PC-9 (cell line): ENCODE measurements at regions of chr5 and their contacts with region 1.

Region 1: GRCh38 chr5:103347716-103348430 is 89.3 kb downstream of the MACIR start:
- DNase-seq: peak; percentile 26 to 72
- H3K4me3 ChIP-seq: no peak overlapping the region
- H3K27ac ChIP-seq: peak overlapping the region; percentile 33; the same call in 1 of the 2 replicates
- H3K4me1 ChIP-seq: peaks cover 17% of the 10 kb centered on the region
- H3K27me3 ChIP-seq: no peaks in the 10 kb centered on the region
- CTCF ChIP-seq: no peak

Region 2: GRCh38 chr5:103166706-103167105 is 181.2 kb before region 1 on chr5:
- CTCF ChIA-PET with region 1: interaction called, 25 read pairs
- POLR2A ChIA-PET with region 1: no interaction called
- intact Hi-C with region 1: no loop called
- DNase-seq: no peak
- H3K4me3 ChIP-seq: no peak overlapping the region
- H3K27ac ChIP-seq: no peak overlapping the region
- H3K4me1 ChIP-seq: no peaks in the 10 kb centered on the region
- H3K27me3 ChIP-seq: no peaks in the 10 kb centered on the region
- CTCF ChIP-seq: no peak

Region 3: DNA sequence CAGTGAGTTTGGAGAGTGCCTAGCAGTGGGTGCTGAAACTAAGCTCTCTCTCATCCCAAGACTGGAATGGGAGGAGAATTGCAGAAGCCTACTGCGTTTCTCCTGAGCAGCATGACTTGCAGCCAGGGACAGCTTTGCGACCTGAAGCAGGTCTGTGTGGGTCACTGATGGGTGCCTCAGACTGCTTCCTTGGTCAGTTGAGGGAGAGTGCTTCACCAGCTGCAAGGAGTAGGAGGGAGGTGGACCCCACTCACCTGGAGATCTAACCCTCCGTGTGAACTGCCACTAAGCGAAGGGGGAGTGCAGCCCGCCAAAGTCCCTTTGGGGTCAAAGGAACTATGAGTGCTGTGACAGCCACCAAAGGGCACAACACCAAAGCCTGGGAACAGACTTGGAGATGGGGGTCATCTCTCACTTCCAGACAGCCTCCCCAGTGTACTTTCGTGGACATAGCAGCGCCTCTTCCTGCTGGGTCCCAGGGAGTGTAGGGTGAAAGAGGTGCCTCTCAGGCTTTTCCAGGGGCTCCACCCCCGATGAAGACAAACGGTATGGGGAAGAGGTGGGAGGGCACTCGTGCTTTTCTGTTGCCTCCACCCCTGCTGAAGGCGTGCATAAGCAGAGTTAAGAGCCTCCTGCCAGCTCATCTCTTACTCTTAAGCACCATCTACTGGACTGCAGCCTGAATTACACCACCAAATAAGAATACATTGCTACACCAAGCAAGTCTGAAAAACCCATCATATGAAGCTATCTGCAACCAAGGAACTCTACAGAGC is 123.6 kb before region 1 on chr5:
- CTCF ChIA-PET with region 1: no interaction called
- POLR2A ChIA-PET with region 1: no interaction called
- intact Hi-C with region 1: no loop called
- DNase-seq: peak; percentile 27 to 54
- H3K4me3 ChIP-seq: no peak overlapping the region
- H3K27ac ChIP-seq: no peak overlapping the region
- H3K4me1 ChIP-seq: no peaks in the 10 kb centered on the region
- H3K27me3 ChIP-seq: no peaks in the 10 kb centered on the region
- CTCF ChIP-seq: peak; percentile 83

Region 4: GRCh38 chr5:103428411-103428871 is 80.6 kb after region 1 on chr5:
- CTCF ChIA-PET with region 1: no interaction called
- POLR2A ChIA-PET with region 1: no interaction called
- intact Hi-C with region 1: no loop called
- DNase-seq: no peak
- H3K4me3 ChIP-seq: no peak overlapping the region
- H3K27ac ChIP-seq: no peak overlapping the region
- H3K4me1 ChIP-seq: no peaks in the 10 kb centered on the region
- H3K27me3 ChIP-seq: no peaks in the 10 kb centered on the region
- CTCF ChIP-seq: no peak